PC-9 (cell line): ENCODE measurements at regions of chr2 and their contacts with region 1.

Region 1: DNA sequence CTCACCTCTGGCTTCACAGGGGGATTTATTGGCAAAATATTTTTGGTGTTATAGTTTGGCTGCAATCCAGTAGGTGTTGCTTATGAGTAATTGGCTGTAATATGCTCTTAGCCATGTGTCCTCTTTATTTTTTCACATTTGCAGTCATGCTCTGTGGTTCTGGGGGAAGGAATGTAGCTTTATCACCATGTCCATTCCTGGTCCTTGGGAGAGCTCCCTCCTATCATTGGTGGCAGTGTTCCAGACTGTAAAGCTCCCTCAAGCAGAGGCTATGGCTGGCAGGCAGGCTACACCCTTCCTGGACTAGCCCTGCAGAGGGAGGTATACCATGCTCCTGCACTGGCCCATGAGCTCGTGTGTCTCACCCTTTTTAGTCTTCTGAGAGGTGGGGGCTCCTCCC is 120.0 kb upstream of the FSIP2 start:
- DNase-seq: no peak
- H3K4me3 ChIP-seq: no peak overlapping the region
- H3K27ac ChIP-seq: no peak overlapping the region
- H3K4me1 ChIP-seq: no peaks in the 10 kb centered on the region
- H3K27me3 ChIP-seq: no peaks in the 10 kb centered on the region
- CTCF ChIP-seq: no peak

Region 2: GRCh38 chr2:185284696-185285095 is 333.9 kb before region 1 on chr2:
- CTCF ChIA-PET with region 1: no interaction called
- POLR2A ChIA-PET with region 1: no interaction called
- intact Hi-C with region 1: no loop called
- DNase-seq: no peak
- H3K4me3 ChIP-seq: no peak overlapping the region
- H3K27ac ChIP-seq: no peak overlapping the region
- H3K4me1 ChIP-seq: no peaks in the 10 kb centered on the region
- H3K27me3 ChIP-seq: no peaks in the 10 kb centered on the region
- CTCF ChIP-seq: no peak

Region 3: DNA sequence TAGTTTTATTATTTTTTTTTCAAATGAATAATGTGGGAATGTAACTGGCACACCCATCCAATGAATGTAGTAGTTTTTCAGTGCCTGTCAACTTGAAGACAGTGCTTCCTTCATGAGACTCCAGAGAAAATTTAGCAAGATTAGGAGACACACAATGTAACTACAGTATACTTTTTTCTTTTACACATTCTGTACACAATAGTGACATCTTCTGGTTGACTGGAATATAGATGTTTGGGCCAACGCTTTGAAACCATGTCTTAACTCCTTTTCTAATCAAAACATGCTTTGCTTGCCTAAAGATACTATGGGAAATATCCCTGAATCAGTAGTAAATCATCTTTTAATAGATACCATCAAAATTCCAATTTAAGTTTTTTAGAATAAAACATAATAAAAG is 637.9 kb after region 1 on chr2:
- CTCF ChIA-PET with region 1: no interaction called
- POLR2A ChIA-PET with region 1: no interaction called
- intact Hi-C with region 1: loop called (anchors 10 kb)
- DNase-seq: no peak
- H3K4me3 ChIP-seq: no peak overlapping the region
- H3K27ac ChIP-seq: no peak overlapping the region
- H3K4me1 ChIP-seq: no peaks in the 10 kb centered on the region
- H3K27me3 ChIP-seq: no peaks in the 10 kb centered on the region
- CTCF ChIP-seq: peak; percentile 71